ENCODE measurements at regions of chr10 and their contacts with region 1.

Region 1: GRCh38 chr10:49407552-49408137 is 11.8 kb upstream of the DRGX start:
- DNase-seq: peak in 1 of 2 experiments; percentile 92
- H3K4me3 ChIP-seq: no peak overlapping the region
- H3K27ac ChIP-seq: no peak overlapping the region
- H3K4me1 ChIP-seq: peaks cover 0 to 11% (median 4%) of the 10 kb centered on the region in 4 experiments; a peak in 4 of 7 replicates
- H3K27me3 ChIP-seq: peaks cover 0 to 9% (median 0%) of the 10 kb centered on the region in 4 experiments; a peak in 2 of 7 replicates
- CTCF ChIP-seq: peak; percentile 94 to 97 (median 94)
- EP300 ChIP-seq: no peak
- POLR2A ChIP-seq: no peak
- RAD21 ChIP-seq: peak; percentile 86 to 92

Region 2: GRCh38 chr10:49280001-49280408 is 127.6 kb before region 1 on chr10:
- CTCF ChIA-PET with region 1: interaction called, 10 read pairs
- POLR2A ChIA-PET with region 1: no interaction called
- DNase-seq: no peak
- H3K4me3 ChIP-seq: no peak overlapping the region
- H3K27ac ChIP-seq: no peak overlapping the region
- H3K4me1 ChIP-seq: no peaks in the 10 kb centered on the region; a peak in 1 of 7 replicates
- H3K27me3 ChIP-seq: no peaks in the 10 kb centered on the region
- CTCF ChIP-seq: no peak
- EP300 ChIP-seq: no peak
- POLR2A ChIP-seq: no peak
- RAD21 ChIP-seq: no peak

Region 3: DNA sequence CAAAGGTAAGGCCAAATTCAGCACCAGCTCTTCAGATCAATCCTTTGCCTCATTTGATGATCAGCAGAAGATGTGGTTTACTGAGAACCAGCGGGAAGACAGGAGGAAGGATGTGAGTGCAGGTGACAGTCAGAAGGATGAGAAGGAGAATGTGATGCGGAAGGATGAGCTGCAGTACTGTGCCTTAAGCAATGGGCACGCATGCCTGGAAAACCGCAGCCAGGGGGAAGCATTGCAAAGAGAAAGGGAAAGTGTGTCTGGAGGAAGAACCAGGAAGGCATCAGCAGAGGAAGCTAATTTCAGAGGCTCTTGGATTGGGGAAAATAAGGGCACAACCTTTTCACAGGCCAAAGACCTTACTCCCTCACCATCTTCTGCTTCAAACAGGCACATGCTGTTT is 82.9 kb before region 1 on chr10:
- CTCF ChIA-PET with region 1: interaction called, 20 read pairs
- POLR2A ChIA-PET with region 1: no interaction called
- DNase-seq: no peak
- H3K4me3 ChIP-seq: no peak overlapping the region
- H3K27ac ChIP-seq: no peak overlapping the region
- H3K4me1 ChIP-seq: peaks cover 0 to 2% (median 0%) of the 10 kb centered on the region in 4 experiments; a peak in 1 of 7 replicates
- H3K27me3 ChIP-seq: no peaks in the 10 kb centered on the region; a peak in 1 of 7 replicates
- CTCF ChIP-seq: peak; percentile 58 to 79 (median 59)
- EP300 ChIP-seq: no peak
- POLR2A ChIP-seq: no peak
- RAD21 ChIP-seq: peak; percentile 75 to 84

Region 4: GRCh38 chr10:49369216-49370162 is 38.2 kb before region 1 on chr10:
- CTCF ChIA-PET with region 1: interaction called, 10 read pairs
- POLR2A ChIA-PET with region 1: no interaction called
- DNase-seq: no peak
- H3K4me3 ChIP-seq: no peak overlapping the region
- H3K27ac ChIP-seq: no peak overlapping the region
- H3K4me1 ChIP-seq: no peaks in the 10 kb centered on the region
- H3K27me3 ChIP-seq: no peaks in the 10 kb centered on the region; a peak in 1 of 7 replicates
- CTCF ChIP-seq: no peak
- EP300 ChIP-seq: no peak
- POLR2A ChIP-seq: no peak
- RAD21 ChIP-seq: no peak

Region 5: GRCh38 chr10:49419005-49419404 is 11.4 kb after region 1 on chr10:
- CTCF ChIA-PET with region 1: interaction called, 62 read pairs
- POLR2A ChIA-PET with region 1: interaction called, 5 read pairs
- DNase-seq: no peak
- H3K4me3 ChIP-seq: no peak overlapping the region
- H3K27ac ChIP-seq: no peak overlapping the region
- H3K4me1 ChIP-seq: peaks cover 0 to 6% (median 3%) of the 10 kb centered on the region in 4 experiments; a peak in 4 of 7 replicates
- H3K27me3 ChIP-seq: no peaks in the 10 kb centered on the region
- CTCF ChIP-seq: no peak
- EP300 ChIP-seq: peak in 1 of 2 experiments; percentile 40; a peak in 1 of 3 replicates
- POLR2A ChIP-seq: no peak
- RAD21 ChIP-seq: no peak

Region 6: GRCh38 chr10:49474901-49475300 is 67.3 kb after region 1 on chr10:
- CTCF ChIA-PET with region 1: interaction called, 11 read pairs
- POLR2A ChIA-PET with region 1: no interaction called
- DNase-seq: no peak
- H3K4me3 ChIP-seq: no peak overlapping the region
- H3K27ac ChIP-seq: no peak overlapping the region
- H3K4me1 ChIP-seq: no peaks in the 10 kb centered on the region
- H3K27me3 ChIP-seq: no peaks in the 10 kb centered on the region
- CTCF ChIP-seq: no peak
- EP300 ChIP-seq: no peak
- POLR2A ChIP-seq: no peak
- RAD21 ChIP-seq: no peak

Region 7: GRCh38 chr10:49518982-49519578 is 111.4 kb after region 1 on chr10:
- CTCF ChIA-PET with region 1: interaction called, 261 read pairs
- POLR2A ChIA-PET with region 1: no interaction called
- DNase-seq: peak in 1 of 2 experiments; percentile 56
- H3K4me3 ChIP-seq: no peak overlapping the region
- H3K27ac ChIP-seq: no peak overlapping the region
- H3K4me1 ChIP-seq: no peaks in the 10 kb centered on the region; a peak in 1 of 7 replicates
- H3K27me3 ChIP-seq: no peaks in the 10 kb centered on the region
- CTCF ChIP-seq: peak in 2 of 3 experiments; percentile 69; a peak in 3 of 4 replicates
- EP300 ChIP-seq: no peak
- POLR2A ChIP-seq: no peak
- RAD21 ChIP-seq: peak; percentile 82 to 85